CD8-positive, alpha-beta T cell (primary cell): ENCODE measurements at regions of chr19 and their contacts with region 1.

Region 1: GRCh38 chr19:1825909-1826556 is 14.0 kb upstream of the ATP8B3 start:
- DNase-seq: peak; percentile 66 to 86 (median 81)
- ATAC-seq: peak; percentile 87
- H3K4me3 ChIP-seq: no peak overlapping the region
- H3K4me3 Mint-ChIP-seq: no peak overlapping the region
- H3K27ac ChIP-seq: no peak overlapping the region
- H3K27ac Mint-ChIP-seq: no peak overlapping the region
- H3K4me1 ChIP-seq: peaks cover 3% of the 10 kb centered on the region
- H3K4me1 Mint-ChIP-seq: peaks cover 4% of the 10 kb centered on the region
- H3K27me3 ChIP-seq: no peaks in the 10 kb centered on the region
- H3K27me3 Mint-ChIP-seq: no peaks in the 10 kb centered on the region
- CTCF ChIP-seq: peak; percentile 76

Region 2: DNA sequence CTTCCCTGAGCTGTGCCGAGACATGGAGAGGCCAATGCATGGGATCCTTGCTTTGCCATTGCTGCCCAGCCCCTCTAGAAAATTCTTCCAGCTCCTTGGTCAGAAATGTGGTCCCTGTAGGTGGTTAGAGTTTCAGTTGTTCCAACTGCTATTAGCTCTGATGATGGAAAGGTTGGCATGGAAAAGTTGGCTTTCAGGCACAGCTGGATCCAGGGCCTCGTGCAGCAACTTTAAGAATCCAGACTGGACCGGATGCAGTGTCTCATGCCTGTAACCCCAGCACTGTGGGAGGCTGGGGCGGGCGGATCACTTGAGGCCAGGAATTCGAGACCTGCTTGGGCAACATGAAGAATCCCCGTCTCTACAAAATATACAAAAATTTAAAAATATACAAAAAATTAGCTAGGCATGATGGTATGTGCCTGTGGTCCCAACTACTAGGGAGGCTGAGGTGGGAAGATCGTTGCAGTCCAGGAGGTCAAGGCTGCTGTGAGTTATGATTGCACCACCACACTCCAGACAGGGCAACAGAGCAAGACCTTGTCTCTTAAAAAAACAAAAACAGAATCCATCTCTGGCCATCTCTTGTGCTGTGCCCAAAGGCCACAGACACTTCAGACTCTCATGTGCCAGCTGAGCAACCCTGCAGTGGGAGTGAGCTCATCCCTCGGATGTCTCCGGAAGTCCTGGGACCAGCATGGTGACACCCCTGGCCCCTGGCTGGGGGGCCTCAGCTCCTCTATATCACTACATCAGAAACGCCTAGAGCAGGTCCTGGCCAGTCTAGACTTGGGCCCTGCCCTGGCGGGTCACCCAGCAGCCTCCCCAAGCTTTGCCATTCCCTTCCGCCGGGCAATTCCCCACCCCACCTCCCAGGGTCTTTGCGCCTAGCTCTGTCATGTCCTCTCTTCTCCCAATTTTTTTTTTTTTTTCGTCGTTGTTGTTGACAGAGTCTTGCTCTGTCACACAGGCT is 274.7 kb before region 1 on chr19:
- CTCF ChIA-PET with region 1: interaction called, 15 read pairs
- POLR2A ChIA-PET with region 1: interaction called, 3 read pairs
- intact Hi-C with region 1: loop called (anchors 1 kb)
- DNase-seq: no peak
- ATAC-seq: no peak
- H3K4me3 ChIP-seq: no peak overlapping the region
- H3K4me3 Mint-ChIP-seq: no peak overlapping the region
- H3K27ac ChIP-seq: no peak overlapping the region
- H3K27ac Mint-ChIP-seq: no peak overlapping the region
- H3K4me1 ChIP-seq: no peaks in the 10 kb centered on the region
- H3K4me1 Mint-ChIP-seq: peaks cover under 1% of the 10 kb centered on the region
- H3K27me3 ChIP-seq: peaks cover 0 to 2% of the 10 kb centered on the region in 2 experiments
- H3K27me3 Mint-ChIP-seq: peaks cover 12% of the 10 kb centered on the region
- CTCF ChIP-seq: no peak

Region 3: GRCh38 chr19:1780272-1780958 is 45.6 kb before region 1 on chr19:
- CTCF ChIA-PET with region 1: interaction called, 12 read pairs
- POLR2A ChIA-PET with region 1: no interaction called
- intact Hi-C with region 1: no loop called
- DNase-seq: no peak
- ATAC-seq: no peak
- H3K4me3 ChIP-seq: no peak overlapping the region
- H3K4me3 Mint-ChIP-seq: no peak overlapping the region
- H3K27ac ChIP-seq: no peak overlapping the region
- H3K27ac Mint-ChIP-seq: no peak overlapping the region
- H3K4me1 ChIP-seq: no peaks in the 10 kb centered on the region
- H3K4me1 Mint-ChIP-seq: no peaks in the 10 kb centered on the region
- H3K27me3 ChIP-seq: peaks cover 22 to 39% of the 10 kb centered on the region in 2 experiments
- H3K27me3 Mint-ChIP-seq: peaks cover 53% of the 10 kb centered on the region
- CTCF ChIP-seq: no peak

Region 4: DNA sequence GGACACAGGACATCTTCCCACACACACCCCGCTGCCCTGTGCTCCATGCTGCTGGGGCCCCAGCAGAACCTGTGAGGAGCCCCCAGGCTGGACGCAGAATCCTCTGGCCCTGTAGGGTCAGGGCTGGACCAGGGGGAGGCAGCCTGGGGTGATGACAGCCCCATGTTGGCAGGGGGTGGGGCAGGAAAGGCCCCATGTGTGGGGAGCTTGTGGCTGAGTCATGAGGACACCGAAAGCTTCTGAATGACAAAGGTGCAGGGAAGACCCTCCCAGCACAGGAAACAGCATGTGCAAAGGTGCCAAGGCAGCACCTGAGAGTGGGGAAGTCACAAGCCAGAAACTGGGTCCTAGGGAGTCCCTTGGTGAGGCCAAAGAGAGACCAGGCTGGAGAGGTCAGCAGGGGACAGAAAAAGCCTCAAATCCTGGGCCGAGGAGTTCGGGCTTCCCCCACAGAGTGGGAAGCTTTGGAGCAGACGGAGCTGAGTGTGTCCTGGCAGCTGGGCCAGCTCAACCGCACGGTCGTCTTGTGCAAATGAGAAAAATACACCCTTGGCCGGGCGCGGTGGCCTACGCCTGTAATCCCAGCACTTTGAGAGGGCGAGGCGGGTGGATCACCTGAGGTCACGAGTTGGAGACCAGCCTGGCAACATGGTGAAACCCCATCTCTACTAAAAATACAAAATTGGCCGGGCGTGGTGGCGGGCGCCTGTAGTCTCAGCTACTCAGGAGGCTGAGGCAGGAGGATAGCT is 31.4 kb before region 1 on chr19:
- CTCF ChIA-PET with region 1: interaction called, 13 read pairs
- POLR2A ChIA-PET with region 1: no interaction called
- intact Hi-C with region 1: loop called (anchors 1 to 2 kb)
- DNase-seq: no peak
- ATAC-seq: no peak
- H3K4me3 ChIP-seq: no peak overlapping the region
- H3K4me3 Mint-ChIP-seq: no peak overlapping the region
- H3K27ac ChIP-seq: no peak overlapping the region
- H3K27ac Mint-ChIP-seq: no peak overlapping the region
- H3K4me1 ChIP-seq: peaks cover 5% of the 10 kb centered on the region
- H3K4me1 Mint-ChIP-seq: no peaks in the 10 kb centered on the region
- H3K27me3 ChIP-seq: peaks cover 0 to 11% of the 10 kb centered on the region in 2 experiments
- H3K27me3 Mint-ChIP-seq: peaks cover 9% of the 10 kb centered on the region
- CTCF ChIP-seq: no peak

Region 5: DNA sequence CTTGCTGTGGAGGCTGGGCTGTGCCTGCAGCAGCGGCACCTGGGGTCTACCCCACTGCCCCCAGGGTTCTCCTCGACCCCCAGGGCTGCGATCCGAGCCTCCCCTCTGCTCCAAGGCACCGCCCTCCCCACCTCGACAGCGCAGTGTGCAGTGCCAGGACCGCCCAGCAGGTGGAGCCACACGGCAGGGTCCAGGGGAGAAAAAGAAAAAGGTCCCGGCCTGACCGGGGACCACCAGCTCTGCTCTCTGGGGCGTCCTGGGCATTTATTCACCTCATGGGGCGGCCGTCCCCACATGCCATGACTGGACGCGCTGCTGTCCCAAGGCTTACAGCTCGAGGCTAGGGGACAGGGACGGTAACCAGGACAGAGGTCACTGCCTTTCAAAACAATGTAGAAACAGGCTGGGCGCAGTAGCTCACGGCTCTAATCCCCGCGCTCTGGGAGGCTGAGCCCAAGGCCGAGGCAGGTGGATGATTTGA is 11.6 kb after region 1 on chr19:
- CTCF ChIA-PET with region 1: interaction called, 36 read pairs
- POLR2A ChIA-PET with region 1: no interaction called
- intact Hi-C with region 1: no loop called
- DNase-seq: peak in 7 of 9 experiments; percentile 41 to 71 (median 66)
- ATAC-seq: peak; percentile 92
- H3K4me3 ChIP-seq: no peak overlapping the region
- H3K4me3 Mint-ChIP-seq: no peak overlapping the region
- H3K27ac ChIP-seq: no peak overlapping the region
- H3K27ac Mint-ChIP-seq: no peak overlapping the region
- H3K4me1 ChIP-seq: peaks cover 22% of the 10 kb centered on the region
- H3K4me1 Mint-ChIP-seq: peaks cover 40% of the 10 kb centered on the region
- H3K27me3 ChIP-seq: no peaks in the 10 kb centered on the region
- H3K27me3 Mint-ChIP-seq: no peaks in the 10 kb centered on the region
- CTCF ChIP-seq: peak; percentile 88